Activated CD4-positive, alpha-beta T cell treated with anti-CD3 and anti-CD28 coated beads, Interleukin-2, amount 10 ng/mL, durations not matched to agents 24 days and 14 days (primary cell): ENCODE measurements at regions of chr21 and their contacts with region 1.

Region 1: GRCh38 chr21:31088315-31088714 is 50.0 kb upstream of the KRTAP19-8 start:
- DNase-seq: no peak
- H3K4me3 Mint-ChIP-seq: no peak overlapping the region
- H3K27ac Mint-ChIP-seq: no peak overlapping the region
- H3K4me1 Mint-ChIP-seq: peaks cover 14% of the 10 kb centered on the region
- H3K27me3 Mint-ChIP-seq: peaks cover 32% of the 10 kb centered on the region

Region 2: DNA sequence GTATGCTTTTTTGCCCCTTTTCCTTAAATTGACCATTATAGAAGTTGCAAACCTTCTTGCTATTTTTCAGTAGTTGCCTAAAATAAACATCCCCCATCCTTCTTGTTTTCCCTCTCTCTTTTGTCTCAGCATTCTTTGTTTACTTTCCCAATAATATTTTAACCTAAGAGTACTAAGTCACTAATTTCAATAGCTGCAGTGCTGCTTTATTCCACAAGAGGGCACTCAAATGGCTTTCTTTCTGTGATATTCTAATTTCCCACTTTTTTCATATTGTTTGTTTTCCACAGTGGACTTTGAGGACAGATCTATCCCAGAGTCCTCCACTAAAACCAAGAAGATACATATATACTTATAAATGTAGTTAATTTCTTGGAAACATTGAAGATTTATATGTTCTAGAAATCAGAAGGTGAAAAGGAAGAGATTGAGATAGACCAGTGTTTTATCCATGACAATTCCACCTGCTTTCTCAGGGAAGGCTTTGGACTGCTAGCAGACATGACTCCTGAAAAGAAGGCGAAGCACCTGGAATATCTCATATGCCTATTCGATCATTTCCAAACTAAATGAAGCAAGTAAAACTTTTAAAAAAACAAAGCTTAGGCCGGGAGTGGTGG is 1043.8 kb before region 1 on chr21:
- intact Hi-C with region 1: loop called (anchors 10 kb)
- DNase-seq: peak; percentile 58
- H3K4me3 Mint-ChIP-seq: no peak overlapping the region
- H3K27ac Mint-ChIP-seq: no peak overlapping the region
- H3K4me1 Mint-ChIP-seq: no peaks in the 10 kb centered on the region
- H3K27me3 Mint-ChIP-seq: no peaks in the 10 kb centered on the region

Region 3: DNA sequence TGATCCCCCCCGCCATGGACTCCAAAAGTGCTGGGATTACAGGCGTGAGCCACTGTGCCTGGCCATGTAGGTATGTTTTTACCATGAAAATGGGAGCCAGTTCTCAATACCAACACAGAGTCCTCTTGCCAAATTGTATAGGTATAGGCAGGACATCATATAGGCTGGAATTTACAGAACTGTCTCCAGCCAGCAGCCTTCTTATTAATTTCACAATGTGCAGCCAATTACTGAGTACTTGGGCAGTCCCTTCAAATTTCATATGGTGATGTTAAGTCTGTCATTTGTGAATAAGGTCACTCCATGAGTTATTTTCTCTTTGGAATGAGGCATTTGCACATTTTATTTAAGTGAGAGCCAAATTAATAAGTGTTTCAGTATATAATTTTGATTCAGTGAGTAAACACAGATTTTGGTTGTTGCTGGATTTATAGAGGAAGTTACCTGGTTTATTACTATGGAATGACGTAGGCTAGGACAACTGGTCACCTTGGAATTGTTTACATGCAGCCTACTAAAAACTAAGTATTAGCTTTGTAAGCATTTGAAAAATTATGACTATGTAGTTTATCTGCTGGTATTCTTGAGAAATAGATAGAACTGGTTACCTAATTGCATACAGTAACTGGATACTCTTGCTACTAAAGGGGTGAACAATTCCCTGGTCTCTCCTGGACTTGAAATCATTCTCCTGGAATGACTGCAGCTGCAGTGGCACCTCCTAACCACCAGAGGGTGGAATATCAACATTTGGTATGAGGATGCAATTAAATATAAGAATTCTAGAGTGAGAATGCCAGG is 747.7 kb before region 1 on chr21:
- intact Hi-C with region 1: loop called (anchors 1 kb)
- DNase-seq: peak; percentile 69
- H3K4me3 Mint-ChIP-seq: no peak overlapping the region
- H3K27ac Mint-ChIP-seq: no peak overlapping the region
- H3K4me1 Mint-ChIP-seq: no peaks in the 10 kb centered on the region
- H3K27me3 Mint-ChIP-seq: no peaks in the 10 kb centered on the region

Region 4: DNA sequence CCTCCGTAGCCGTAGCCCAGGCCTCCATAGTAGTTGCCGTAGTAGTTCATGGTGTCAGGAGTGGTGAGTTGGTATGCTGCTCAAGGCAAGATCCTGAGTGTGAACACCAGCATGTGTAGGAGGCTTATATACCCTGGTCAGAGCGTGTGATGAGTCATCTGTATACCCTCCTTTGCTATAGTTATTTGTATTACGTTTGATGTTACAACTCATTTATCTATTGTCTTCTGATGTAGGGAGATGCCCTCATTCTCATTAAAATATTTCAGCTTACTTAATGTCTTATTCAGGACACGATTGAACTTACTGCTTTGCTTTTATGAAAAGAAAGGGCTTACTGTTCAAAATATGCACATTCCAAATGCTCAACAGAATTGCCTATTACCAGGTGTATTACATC is 586.3 kb before region 1 on chr21 and contains the start of gene KRTAP19-5:
- intact Hi-C with region 1: loop called (anchors 5 kb)
- DNase-seq: no peak
- H3K4me3 Mint-ChIP-seq: no peak within 1 kb of the TSS
- H3K27ac Mint-ChIP-seq: no peak within 1 kb of the TSS
- H3K4me1 Mint-ChIP-seq: no peaks in the 10 kb centered on the region
- H3K27me3 Mint-ChIP-seq: no peaks in the 10 kb centered on the region
- total RNA-seq, gene KRTAP19-5: not detected in 2 replicates

Region 5: GRCh38 chr21:30718239-30718909 is 369.9 kb before region 1 on chr21 and contains the start of gene KRTAP21-3:
- intact Hi-C with region 1: loop called (anchors 10 kb)
- DNase-seq: peak; percentile 67
- H3K4me3 Mint-ChIP-seq: peak within 1 kb of the TSS; percentile 62
- H3K27ac Mint-ChIP-seq: peak within 1 kb of the TSS; percentile 68
- H3K4me1 Mint-ChIP-seq: peaks cover 31% of the 10 kb centered on the region
- H3K27me3 Mint-ChIP-seq: peaks cover 2% of the 10 kb centered on the region
- total RNA-seq, gene KRTAP21-3: not detected in 2 replicates

Region 6: GRCh38 chr21:30831194-30831765 is 257.0 kb before region 1 on chr21:
- intact Hi-C with region 1: loop called (anchors 2 kb)
- DNase-seq: peak; percentile 78
- H3K4me3 Mint-ChIP-seq: no peak overlapping the region
- H3K27ac Mint-ChIP-seq: no peak overlapping the region
- H3K4me1 Mint-ChIP-seq: no peaks in the 10 kb centered on the region
- H3K27me3 Mint-ChIP-seq: peaks cover 7% of the 10 kb centered on the region

Region 7: DNA sequence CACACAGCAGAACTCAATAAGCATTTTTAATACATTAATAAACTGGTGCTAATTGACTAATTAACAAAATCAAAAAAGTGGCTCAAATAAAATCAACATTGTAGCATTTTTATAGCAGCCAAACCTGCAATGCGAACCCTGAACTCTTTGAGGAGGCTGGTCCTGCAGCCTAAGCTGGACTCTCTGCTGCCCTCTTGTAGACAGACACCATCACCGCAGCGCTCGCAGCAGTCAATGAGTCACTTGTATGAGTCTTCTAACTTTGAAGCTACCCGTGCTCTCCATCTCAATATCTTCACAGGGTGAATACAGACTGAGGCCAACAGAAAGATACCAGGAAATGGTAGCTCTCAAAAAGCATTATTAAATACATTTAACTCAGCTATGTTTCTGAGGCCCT is 249.0 kb before region 1 on chr21:
- intact Hi-C with region 1: loop called (anchors 2 kb)
- DNase-seq: peak; percentile 72
- H3K4me3 Mint-ChIP-seq: no peak overlapping the region
- H3K27ac Mint-ChIP-seq: no peak overlapping the region
- H3K4me1 Mint-ChIP-seq: no peaks in the 10 kb centered on the region
- H3K27me3 Mint-ChIP-seq: peaks cover 4% of the 10 kb centered on the region